ENCODE measurements at regions of chr5 and their contacts with region 1.

Region 1: DNA sequence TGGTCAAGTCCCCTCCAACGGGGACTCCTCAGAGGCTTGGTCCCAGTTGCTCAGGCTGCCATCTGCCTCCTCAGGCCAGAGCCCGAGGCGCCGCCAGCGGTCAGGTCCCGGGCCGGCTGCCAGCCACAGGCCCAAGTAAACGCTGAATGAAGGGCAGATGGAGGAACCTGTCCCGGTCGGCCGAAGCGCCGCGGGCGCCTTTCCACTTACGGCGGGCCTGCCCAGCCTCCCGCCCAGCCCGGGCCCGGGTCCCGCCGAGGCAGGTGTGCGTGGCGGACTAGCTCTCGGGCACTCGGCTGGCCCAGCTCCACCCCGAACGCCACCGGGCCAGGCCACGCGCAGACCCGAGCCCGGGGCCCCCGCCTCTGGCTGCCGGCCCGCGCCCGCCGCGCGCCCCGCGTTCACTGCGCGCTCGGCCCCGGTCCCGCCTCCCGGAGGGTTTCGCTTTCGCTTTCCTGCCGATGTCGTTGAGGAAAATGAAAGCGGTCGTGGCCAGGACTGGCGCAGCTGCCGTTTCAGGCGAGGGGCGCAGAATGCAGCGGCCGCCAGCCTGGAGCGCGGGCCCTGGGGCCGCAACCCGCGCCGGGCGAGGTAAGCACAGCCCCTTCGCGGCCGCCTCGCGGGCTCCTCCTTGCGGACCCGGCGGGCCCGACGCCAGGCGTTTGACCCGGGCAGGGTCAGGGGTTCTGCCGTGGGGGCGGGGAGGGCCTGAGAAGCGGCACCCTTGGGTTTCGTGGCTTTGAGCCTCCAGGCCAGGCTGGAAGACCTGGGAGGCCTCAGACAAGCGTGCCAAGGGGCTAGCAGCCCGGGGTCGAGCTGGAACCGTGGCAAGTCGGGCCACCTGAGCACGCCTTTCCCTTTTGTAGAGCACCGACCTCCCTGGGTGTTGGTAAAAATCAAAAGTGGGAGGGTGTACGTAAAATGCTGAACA is 41.2 kb downstream of the SLC22A5 start:
- DNase-seq: peak; percentile 92 to 96 (median 95)
- H3K4me3 ChIP-seq: peak overlapping the region; percentile 45 to 90 (median 76)
- H3K27ac ChIP-seq: peak overlapping the region; percentile 92 to 96
- H3K4me1 ChIP-seq: peaks cover 29 to 72% (median 34%) of the 10 kb centered on the region in 4 experiments
- H3K27me3 ChIP-seq: no peaks in the 10 kb centered on the region

Region 2: GRCh38 chr5:132369474-132370180 is 41.1 kb before region 1 on chr5 and contains the start of gene SLC22A5:
- CTCF ChIA-PET with region 1: no interaction called
- POLR2A ChIA-PET with region 1: no interaction called
- DNase-seq: peak; percentile 59 to 86 (median 71)
- H3K4me3 ChIP-seq: peak within 1 kb of the TSS; percentile 56 to 87 (median 74)
- H3K27ac ChIP-seq: peak within 1 kb of the TSS; percentile 26 to 81
- H3K4me1 ChIP-seq: peaks cover 0 to 32% (median 17%) of the 10 kb centered on the region in 4 experiments
- H3K27me3 ChIP-seq: peaks cover 0 to 2% (median 0%) of the 10 kb centered on the region in 5 experiments

Region 3: DNA sequence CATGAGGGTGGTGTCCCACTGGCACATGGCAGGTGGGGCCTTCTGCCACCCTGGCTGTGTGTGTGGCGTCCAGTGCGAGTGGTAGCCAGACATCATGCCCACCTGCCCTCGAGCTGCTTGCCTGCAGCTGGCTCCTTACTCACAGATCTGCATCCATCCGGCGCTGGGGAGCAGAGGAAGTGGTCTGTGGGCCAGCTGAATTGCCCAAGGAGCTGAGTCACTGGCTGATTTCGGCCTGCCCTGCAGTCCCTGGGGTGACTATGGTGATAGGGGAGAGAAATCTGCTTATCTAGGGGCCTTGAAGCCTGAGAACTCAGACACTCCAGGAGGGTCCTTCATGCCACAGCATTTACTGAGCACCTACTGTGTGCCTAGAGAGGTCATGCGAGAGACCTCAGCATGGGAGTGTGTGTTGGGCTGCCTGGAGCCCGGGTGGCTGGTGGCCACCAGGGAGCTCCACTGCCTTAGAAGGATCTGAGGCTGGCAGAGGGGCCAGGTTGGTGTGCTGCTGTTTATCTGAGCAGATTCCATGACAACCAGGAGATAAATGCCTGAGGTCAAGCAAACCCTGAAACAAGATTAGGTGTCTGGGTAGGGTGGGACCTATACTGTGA is 15.9 kb after region 1 on chr5:
- CTCF ChIA-PET with region 1: interaction called, 28 read pairs
- POLR2A ChIA-PET with region 1: interaction called, 6 read pairs
- DNase-seq: peak; percentile 92 to 99 (median 99)
- H3K4me3 ChIP-seq: peak overlapping the region in 2 of 7 experiments; percentile 21 to 34
- H3K27ac ChIP-seq: peak overlapping the region; percentile 82 to 93
- H3K4me1 ChIP-seq: peaks cover 82 to 99% (median 99%) of the 10 kb centered on the region in 4 experiments
- H3K27me3 ChIP-seq: no peaks in the 10 kb centered on the region

Region 4: GRCh38 chr5:132466433-132467286 is 55.9 kb after region 1 on chr5:
- CTCF ChIA-PET with region 1: interaction called, 50 read pairs
- POLR2A ChIA-PET with region 1: interaction called, 10 read pairs
- DNase-seq: peak; percentile 88 to 99 (median 98)
- H3K4me3 ChIP-seq: peak overlapping the region in 4 of 7 experiments; percentile 29 to 66 (median 40)
- H3K27ac ChIP-seq: peak overlapping the region; percentile 67 to 69
- H3K4me1 ChIP-seq: peaks cover 45 to 93% (median 87%) of the 10 kb centered on the region in 4 experiments
- H3K27me3 ChIP-seq: no peaks in the 10 kb centered on the region

Region 5: DNA sequence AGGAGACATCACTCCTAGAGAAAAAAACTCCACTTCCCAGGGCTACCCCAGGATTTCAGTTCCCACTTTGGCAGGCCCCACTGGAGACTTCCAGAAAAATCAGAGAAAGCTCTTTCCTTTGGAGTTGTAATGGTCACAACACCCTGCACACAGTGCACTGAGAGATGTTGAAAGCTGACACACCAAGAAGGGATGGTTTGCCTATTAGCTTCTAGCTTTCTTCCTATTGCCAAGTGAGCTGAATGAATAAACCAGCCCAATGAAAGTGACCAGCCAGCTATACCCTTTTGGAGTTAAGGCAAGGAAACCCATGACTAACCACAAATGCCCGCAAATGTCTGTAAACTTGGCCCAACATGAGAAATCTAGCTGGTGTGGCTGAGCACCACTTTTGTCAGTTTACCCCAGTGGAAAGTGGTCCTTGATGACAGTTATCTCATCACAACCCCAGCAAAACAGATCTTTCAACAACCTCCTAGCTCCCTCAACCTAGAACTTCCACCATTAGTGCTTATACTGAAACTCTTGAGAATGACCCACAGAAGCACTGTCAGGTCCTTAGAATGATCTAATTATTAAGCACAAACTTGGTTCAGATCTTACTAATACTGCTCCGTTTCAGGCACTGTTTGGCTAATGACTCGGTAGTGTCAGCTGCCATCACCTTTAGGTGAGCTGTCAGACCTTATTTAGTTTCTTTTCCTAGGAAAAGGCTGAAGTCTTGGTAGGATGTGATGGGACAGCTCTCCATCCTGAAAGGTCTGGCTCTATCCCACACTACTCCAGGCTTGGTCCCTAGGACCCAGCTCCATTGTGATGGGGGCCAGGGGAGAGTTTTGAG is 68.6 kb after region 1 on chr5:
- CTCF ChIA-PET with region 1: interaction called, 43 read pairs
- POLR2A ChIA-PET with region 1: interaction called, 15 read pairs
- DNase-seq: peak in 1 of 3 donors; percentile 42
- H3K4me3 ChIP-seq: no peak overlapping the region
- H3K27ac ChIP-seq: no peak overlapping the region
- H3K4me1 ChIP-seq: peaks cover 3 to 40% (median 34%) of the 10 kb centered on the region in 4 experiments
- H3K27me3 ChIP-seq: no peaks in the 10 kb centered on the region

Region 6: GRCh38 chr5:132500931-132501630 is 90.4 kb after region 1 on chr5:
- CTCF ChIA-PET with region 1: interaction called, 56 read pairs
- POLR2A ChIA-PET with region 1: interaction called, 4 read pairs
- DNase-seq: peak; percentile 82 to 91 (median 91)
- H3K4me3 ChIP-seq: no peak overlapping the region
- H3K27ac ChIP-seq: peak overlapping the region in 1 of 2 experiments; percentile 35
- H3K4me1 ChIP-seq: peaks cover 0 to 40% (median 29%) of the 10 kb centered on the region in 4 experiments
- H3K27me3 ChIP-seq: no peaks in the 10 kb centered on the region

Measured in common myeloid progenitor, CD34-positive (primary cell).